Calu3 (cell line): ENCODE measurements at regions of chr2 and their contacts with region 1.

Region 1: DNA sequence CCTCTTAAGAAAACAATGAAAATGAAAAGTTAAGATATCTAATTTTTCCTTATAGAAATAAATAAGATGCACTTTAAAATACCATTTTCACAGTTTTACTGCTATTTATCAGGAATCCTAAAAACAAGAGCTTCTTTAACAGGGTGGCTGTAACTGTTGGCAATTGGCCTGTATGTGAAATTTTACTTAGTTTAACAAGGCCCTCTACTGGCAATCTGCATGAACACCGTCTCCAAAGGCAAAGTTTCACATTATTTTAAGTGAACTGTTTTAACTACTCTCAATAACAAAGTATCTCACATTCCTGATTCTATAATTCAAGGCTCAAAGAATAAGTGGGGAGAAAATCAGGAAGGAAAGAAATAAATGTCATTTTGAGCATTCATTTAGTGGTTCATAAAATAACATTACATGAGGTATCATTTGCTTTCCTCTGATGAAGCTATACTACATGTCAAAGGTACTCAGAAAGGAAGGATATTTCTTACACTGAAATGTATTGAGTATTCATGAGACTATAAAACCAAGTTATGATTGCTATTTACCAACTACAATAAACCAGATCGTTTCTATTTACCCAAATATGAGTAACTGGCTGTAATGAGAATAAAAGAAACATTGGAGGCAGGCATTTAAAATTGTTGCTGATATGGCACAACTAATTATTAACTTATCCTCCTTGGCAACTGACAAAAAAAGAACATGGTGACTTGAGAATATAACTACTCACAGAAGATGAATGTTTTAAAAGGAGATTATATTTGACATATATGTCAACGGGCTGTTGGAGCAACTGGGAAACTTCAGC is 7.0 kb downstream of the NCKAP5 start:
- DNase-seq: peak; percentile 15
- H3K4me3 Mint-ChIP-seq: no peak overlapping the region
- H3K27ac Mint-ChIP-seq: no peak overlapping the region
- H3K4me1 Mint-ChIP-seq: no peaks in the 10 kb centered on the region
- H3K27me3 Mint-ChIP-seq: peaks cover 17% of the 10 kb centered on the region
- CTCF ChIP-seq: peak; percentile 51

Region 2: GRCh38 chr2:133266041-133266925 is 295.0 kb before region 1 on chr2:
- CTCF ChIA-PET with region 1: interaction called, 3 read pairs
- intact Hi-C with region 1: loop called (anchors 1 kb)
- DNase-seq: peak; percentile 15
- H3K4me3 Mint-ChIP-seq: peak overlapping the region; percentile 83
- H3K27ac Mint-ChIP-seq: peak overlapping the region; percentile 60
- H3K4me1 Mint-ChIP-seq: peaks cover 24% of the 10 kb centered on the region
- H3K27me3 Mint-ChIP-seq: peaks cover 22% of the 10 kb centered on the region
- CTCF ChIP-seq: no peak

Region 3: DNA sequence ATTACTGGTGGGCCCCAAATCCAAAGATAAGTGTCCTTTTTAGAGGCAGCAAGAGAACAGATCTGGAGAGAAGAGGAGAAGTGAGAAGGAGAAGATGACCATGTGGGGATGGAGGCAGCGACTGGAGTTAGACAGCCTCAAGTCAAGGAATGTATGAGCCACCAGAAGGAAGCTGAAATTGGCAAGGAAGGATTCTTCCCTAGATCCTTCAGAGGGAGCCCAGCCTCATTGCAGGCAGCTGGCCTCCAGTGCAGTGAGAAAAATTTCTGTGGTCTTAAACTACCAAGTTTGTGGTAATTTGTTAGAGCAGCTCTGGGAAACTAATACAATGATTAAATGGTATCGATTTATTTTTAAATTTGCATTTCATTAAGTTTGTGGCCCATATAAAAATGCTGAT is 160.8 kb before region 1 on chr2:
- CTCF ChIA-PET with region 1: no interaction called
- intact Hi-C with region 1: no loop called
- DNase-seq: no peak
- H3K4me3 Mint-ChIP-seq: no peak overlapping the region
- H3K27ac Mint-ChIP-seq: no peak overlapping the region
- H3K4me1 Mint-ChIP-seq: no peaks in the 10 kb centered on the region
- H3K27me3 Mint-ChIP-seq: no peaks in the 10 kb centered on the region
- CTCF ChIP-seq: no peak

Region 4: DNA sequence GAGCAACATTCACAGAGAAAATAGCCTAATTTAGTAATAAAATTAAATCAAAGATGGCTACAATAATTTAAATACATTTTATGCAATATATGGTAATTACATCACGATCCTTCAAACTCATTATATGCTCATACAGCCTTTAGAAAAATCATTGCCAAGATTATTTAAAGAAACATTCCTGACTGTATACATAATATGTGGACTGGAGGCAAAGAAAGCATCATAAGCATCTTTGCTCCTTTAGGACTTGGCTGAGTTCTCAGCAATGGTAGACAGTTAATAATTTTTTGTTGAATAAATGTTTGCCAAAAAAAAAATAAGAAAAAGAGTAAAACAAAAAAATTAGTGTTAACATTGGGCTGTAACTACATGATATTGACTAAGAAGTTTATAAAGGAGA is 19.9 kb before region 1 on chr2:
- CTCF ChIA-PET with region 1: no interaction called
- intact Hi-C with region 1: no loop called
- DNase-seq: no peak
- H3K4me3 Mint-ChIP-seq: no peak overlapping the region
- H3K27ac Mint-ChIP-seq: no peak overlapping the region
- H3K4me1 Mint-ChIP-seq: no peaks in the 10 kb centered on the region
- H3K27me3 Mint-ChIP-seq: no peaks in the 10 kb centered on the region
- CTCF ChIP-seq: no peak

Region 5: GRCh38 chr2:133755480-133756300 is 194.4 kb after region 1 on chr2:
- CTCF ChIA-PET with region 1: no interaction called
- intact Hi-C with region 1: no loop called
- DNase-seq: no peak
- H3K4me3 Mint-ChIP-seq: no peak overlapping the region
- H3K27ac Mint-ChIP-seq: no peak overlapping the region
- H3K4me1 Mint-ChIP-seq: no peaks in the 10 kb centered on the region
- H3K27me3 Mint-ChIP-seq: no peaks in the 10 kb centered on the region
- CTCF ChIP-seq: no peak